Natural killer cell (primary cell): ENCODE measurements at regions of chr16 and their contacts with region 1.

Region 1: DNA sequence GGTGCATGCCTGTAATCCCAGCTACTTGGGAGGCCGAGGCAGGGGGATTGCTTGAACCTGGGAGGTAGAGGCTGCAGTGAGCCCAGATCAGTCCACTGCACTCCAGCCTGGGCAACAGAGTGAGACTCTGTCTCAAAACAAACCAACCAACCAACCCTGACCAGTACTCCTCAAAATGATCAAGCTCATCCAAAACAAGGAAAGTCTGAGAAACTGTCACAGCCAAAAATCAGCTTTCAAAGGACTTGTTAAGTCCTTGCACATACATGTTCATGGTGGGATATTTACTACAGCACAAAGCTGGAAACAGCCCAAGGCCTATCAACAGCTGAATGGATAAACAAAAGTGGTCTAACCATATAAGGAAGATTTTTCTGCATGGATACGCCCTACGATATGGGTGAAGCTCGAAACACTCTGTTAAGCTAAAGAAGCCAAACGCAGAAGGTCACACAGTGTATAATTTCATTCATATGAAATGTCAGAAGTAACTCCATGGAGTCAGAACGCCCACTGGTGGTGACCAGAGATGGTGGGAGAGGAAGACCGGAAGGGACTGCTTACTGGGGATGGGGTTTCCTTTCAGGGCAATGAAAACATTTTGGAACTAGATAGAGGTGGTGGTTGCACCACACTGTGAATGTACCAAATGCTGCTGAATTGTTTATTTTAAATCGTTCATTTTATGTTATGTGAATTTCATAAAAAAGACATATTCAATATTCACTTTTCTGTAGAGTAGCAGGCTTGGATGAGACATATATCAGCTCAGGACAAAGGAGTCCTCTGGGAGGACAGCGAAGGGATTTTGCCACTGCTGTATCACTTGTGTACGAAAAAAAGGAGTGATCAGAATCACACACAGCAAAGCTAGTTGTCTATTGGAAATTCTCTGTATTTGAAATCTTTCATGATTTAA is 17.7 kb downstream of the CCL17 start:
- DNase-seq: no peak
- ATAC-seq: no peak
- H3K4me3 ChIP-seq: no peak overlapping the region
- H3K4me3 Mint-ChIP-seq: no peak overlapping the region
- H3K27ac ChIP-seq: no peak overlapping the region
- H3K27ac Mint-ChIP-seq: no peak overlapping the region
- H3K4me1 ChIP-seq: peaks cover 17% of the 10 kb centered on the region
- H3K4me1 Mint-ChIP-seq: peaks cover 9 to 15% of the 10 kb centered on the region in 2 donors
- H3K27me3 ChIP-seq: no peaks in the 10 kb centered on the region
- H3K27me3 Mint-ChIP-seq: no peaks in the 10 kb centered on the region
- CTCF ChIP-seq: no peak

Region 2: DNA sequence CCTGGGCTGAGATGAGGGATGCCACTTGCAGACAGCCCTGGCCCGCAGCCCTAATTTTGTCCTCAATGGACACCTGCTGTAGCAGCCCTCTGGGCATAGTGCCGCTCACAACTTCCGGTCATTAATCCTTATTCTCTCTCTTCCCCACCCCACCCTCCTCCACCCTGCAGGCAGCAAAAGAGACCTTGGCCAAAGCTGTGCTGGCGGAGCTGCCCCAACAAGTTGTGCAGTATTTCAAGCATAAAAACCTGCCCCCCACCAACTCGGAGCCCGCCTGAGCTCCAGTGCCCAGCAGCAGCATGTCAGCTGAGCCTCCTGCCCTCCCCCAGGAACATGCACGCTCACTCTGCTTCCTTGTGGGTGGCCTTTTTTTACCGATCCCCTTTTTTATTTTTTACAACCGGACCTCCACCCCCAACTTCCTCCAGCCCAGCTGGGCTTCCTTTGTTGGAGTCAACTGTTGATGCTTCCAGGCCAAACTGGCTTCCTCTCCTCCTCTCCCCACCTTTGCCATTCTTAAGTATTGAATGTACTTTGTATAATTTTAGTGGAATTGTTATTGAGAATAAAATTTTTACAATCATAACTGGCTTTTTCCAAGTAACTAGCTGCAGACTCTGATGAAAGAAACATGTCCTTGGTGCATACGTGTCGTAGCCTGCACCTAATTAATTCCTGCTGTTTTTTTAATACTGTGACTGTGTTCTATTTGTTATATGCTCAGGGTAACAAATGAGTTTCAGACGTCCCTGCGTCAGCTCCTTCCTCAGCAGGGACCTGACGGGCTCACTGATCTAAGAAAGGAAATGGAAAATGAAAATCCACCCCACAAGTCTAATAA is 274.7 kb before region 1 on chr16:
- intact Hi-C with region 1: no loop called
- DNase-seq: no peak
- ATAC-seq: no peak
- H3K4me3 ChIP-seq: no peak overlapping the region
- H3K4me3 Mint-ChIP-seq: no peak overlapping the region
- H3K27ac ChIP-seq: no peak overlapping the region
- H3K27ac Mint-ChIP-seq: peak overlapping the region in 1 of 2 donors; percentile 22
- H3K4me1 ChIP-seq: peaks cover 16% of the 10 kb centered on the region
- H3K4me1 Mint-ChIP-seq: peaks cover 12 to 18% of the 10 kb centered on the region in 2 donors
- H3K27me3 ChIP-seq: no peaks in the 10 kb centered on the region
- H3K27me3 Mint-ChIP-seq: no peaks in the 10 kb centered on the region
- CTCF ChIP-seq: no peak

Region 3: DNA sequence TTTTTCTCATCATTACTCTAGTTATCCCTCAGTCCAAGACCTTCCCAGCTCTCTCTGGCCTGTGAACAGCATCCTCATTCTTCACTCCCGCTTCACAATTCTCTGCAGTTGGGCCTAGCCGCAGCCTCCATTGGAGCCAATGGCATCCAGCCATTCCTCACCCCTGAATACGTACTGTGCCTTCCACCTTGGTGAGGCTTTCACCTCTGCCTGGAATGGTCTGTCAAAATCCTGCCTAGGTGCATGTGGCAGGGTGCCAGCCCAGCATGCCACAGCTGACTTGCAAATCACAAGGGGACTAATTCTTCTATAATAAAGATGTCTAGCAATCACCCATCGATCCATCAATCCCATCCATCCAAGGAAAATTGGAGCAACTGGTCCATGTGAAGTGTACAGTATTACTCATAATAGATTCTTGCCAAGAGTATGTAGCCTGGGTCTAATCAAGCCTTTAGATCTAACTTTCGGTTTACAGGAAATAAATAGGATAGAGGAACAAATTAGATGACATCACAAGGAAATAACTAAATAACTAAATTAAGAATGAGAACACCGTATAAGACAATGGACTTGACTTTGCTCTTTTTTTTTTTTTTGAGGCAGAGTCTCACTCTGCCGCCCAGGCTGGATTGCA is 55.1 kb before region 1 on chr16:
- intact Hi-C with region 1: no loop called
- DNase-seq: no peak
- ATAC-seq: no peak
- H3K4me3 ChIP-seq: no peak overlapping the region
- H3K4me3 Mint-ChIP-seq: no peak overlapping the region
- H3K27ac ChIP-seq: no peak overlapping the region
- H3K27ac Mint-ChIP-seq: no peak overlapping the region
- H3K4me1 ChIP-seq: no peaks in the 10 kb centered on the region
- H3K4me1 Mint-ChIP-seq: peaks cover 0 to 4% of the 10 kb centered on the region in 2 donors
- H3K27me3 ChIP-seq: no peaks in the 10 kb centered on the region
- H3K27me3 Mint-ChIP-seq: peaks cover 6 to 10% of the 10 kb centered on the region in 2 donors
- CTCF ChIP-seq: no peak

Region 4: DNA sequence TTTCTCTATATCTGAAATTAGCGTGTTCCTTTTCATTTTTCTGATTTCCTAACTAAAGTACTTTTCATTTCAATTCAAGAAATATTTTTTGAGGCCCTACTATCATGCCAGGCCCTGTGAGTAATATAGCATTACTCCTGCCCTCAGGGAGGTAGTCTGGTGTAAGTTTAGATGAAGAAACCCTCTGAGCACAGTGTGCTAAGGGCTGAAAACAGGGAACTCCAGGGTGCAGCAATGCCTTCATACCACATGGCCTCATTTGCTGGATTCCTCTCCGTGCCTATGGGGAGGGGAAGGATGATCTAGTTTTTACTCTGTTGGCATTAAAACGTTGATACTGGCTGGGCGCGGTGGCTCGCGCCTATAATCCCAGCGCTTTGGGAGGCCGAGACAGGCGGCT is 29.7 kb after region 1 on chr16:
- intact Hi-C with region 1: no loop called
- DNase-seq: no peak
- ATAC-seq: no peak
- H3K4me3 ChIP-seq: no peak overlapping the region
- H3K4me3 Mint-ChIP-seq: no peak overlapping the region
- H3K27ac ChIP-seq: no peak overlapping the region
- H3K27ac Mint-ChIP-seq: no peak overlapping the region
- H3K4me1 ChIP-seq: peaks cover 11% of the 10 kb centered on the region
- H3K4me1 Mint-ChIP-seq: peaks cover 0 to 4% of the 10 kb centered on the region in 2 donors
- H3K27me3 ChIP-seq: no peaks in the 10 kb centered on the region
- H3K27me3 Mint-ChIP-seq: no peaks in the 10 kb centered on the region
- CTCF ChIP-seq: no peak

Region 5: DNA sequence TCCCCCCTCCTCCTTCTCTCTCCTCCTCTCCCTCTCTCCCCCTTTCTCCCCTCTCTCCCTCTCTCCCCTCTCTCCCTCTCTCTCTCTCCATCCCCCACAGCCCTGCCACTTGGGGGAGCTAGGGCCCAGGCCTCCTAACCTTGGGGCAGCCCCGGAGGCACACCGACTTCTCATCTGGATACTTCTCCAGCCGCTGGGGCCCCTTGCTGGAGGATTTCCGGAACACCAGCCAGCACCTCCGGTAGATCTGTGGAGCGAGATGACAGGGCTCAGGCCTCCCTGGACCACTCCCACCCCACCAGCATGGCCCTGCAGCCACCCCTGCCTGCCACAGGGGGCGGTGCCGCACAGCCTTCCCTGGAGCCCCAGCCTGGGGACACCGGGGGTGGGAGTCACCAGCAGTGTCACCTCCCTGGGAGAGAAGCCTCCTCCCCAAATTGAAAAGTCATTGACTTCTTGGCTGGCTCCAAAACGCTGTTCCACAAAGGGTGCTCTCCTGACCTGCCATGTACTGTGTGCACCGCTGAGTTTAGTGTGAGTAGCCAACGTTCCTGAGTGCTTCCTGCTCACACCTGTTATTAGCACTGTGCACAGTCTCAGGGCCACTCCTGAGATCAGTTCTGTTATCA is 53.5 kb after region 1 on chr16:
- intact Hi-C with region 1: loop called (anchors 2 kb)
- DNase-seq: peak; percentile 71 to 84
- ATAC-seq: peak; percentile 92 to 98 (median 93)
- H3K4me3 ChIP-seq: no peak overlapping the region
- H3K4me3 Mint-ChIP-seq: no peak overlapping the region
- H3K27ac ChIP-seq: no peak overlapping the region
- H3K27ac Mint-ChIP-seq: peak overlapping the region in 1 of 2 donors; percentile 14
- H3K4me1 ChIP-seq: peaks cover 34% of the 10 kb centered on the region
- H3K4me1 Mint-ChIP-seq: peaks cover 19 to 35% of the 10 kb centered on the region in 2 donors
- H3K27me3 ChIP-seq: no peaks in the 10 kb centered on the region
- H3K27me3 Mint-ChIP-seq: no peaks in the 10 kb centered on the region
- CTCF ChIP-seq: peak; percentile 75

Region 6: DNA sequence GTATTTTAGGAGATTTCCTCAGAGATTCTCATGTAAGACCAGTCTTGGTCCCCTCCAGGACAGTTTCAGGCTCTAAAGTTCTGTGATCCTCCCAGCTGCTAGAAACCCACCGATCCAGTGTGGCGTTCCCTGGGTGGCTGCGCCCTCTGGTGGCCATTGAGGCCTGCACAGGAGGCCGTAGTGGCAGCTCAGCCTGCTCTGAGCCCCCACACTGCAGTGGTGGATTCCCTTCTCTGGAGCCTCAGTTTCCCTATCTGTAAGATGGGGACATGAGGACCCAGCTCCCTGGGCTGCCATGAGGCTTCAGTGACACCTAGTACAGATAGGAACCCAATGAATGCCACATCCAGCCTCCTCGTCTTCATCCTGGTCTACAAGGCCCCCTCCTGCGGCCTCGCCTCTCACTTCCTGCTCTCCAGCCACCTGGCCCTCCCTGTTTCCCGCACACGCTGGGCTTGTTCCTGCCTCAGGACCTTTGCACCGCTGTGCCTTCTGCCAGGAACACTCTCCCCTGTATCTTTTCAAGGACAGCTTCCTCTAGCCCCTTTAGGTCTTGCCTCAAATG is 97.6 kb after region 1 on chr16:
- intact Hi-C with region 1: loop called (anchors 2 kb)
- DNase-seq: peak; percentile 79 to 89
- ATAC-seq: peak; percentile 79 to 99 (median 95)
- H3K4me3 ChIP-seq: no peak overlapping the region
- H3K4me3 Mint-ChIP-seq: no peak overlapping the region
- H3K27ac ChIP-seq: no peak overlapping the region
- H3K27ac Mint-ChIP-seq: peak overlapping the region in 1 of 2 donors; percentile 57
- H3K4me1 ChIP-seq: peaks cover 18% of the 10 kb centered on the region
- H3K4me1 Mint-ChIP-seq: peaks cover 21 to 25% of the 10 kb centered on the region in 2 donors
- H3K27me3 ChIP-seq: no peaks in the 10 kb centered on the region
- H3K27me3 Mint-ChIP-seq: no peaks in the 10 kb centered on the region
- CTCF ChIP-seq: peak; percentile 94